Dendritic cell treated with granulocyte-macrophage colony-stimulating factor and Interleukin-4, amounts not matched to agents 40 ng/mL and 50 ng/mL, for 4 days (primary cell): ENCODE measurements at regions of chrX and their contacts with region 1.

Region 1: DNA sequence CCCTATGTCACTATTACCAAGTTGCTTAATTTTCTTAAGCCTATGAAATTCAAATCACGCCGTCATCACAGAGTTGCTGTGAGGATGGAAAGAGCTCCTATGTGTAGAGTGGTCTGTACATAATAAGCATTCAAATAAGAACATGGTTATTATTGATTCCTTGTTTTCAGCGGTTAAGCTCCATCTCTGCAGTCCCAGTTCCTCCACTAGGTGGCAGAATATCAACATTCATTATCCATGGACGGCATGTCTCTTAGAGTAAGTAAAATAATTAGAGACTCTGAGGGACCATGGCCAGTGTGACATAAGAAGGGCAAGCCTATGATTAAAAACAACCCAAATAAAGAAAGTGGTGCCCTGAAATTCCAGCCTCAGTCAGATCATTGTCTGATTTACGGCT is 132.5 kb upstream of the NHS start:
- H3K4me3 Mint-ChIP-seq: no peak overlapping the region
- H3K27ac Mint-ChIP-seq: no peak overlapping the region
- H3K4me1 Mint-ChIP-seq: no peaks in the 10 kb centered on the region
- H3K27me3 Mint-ChIP-seq: peaks cover 2% of the 10 kb centered on the region

Region 2: DNA sequence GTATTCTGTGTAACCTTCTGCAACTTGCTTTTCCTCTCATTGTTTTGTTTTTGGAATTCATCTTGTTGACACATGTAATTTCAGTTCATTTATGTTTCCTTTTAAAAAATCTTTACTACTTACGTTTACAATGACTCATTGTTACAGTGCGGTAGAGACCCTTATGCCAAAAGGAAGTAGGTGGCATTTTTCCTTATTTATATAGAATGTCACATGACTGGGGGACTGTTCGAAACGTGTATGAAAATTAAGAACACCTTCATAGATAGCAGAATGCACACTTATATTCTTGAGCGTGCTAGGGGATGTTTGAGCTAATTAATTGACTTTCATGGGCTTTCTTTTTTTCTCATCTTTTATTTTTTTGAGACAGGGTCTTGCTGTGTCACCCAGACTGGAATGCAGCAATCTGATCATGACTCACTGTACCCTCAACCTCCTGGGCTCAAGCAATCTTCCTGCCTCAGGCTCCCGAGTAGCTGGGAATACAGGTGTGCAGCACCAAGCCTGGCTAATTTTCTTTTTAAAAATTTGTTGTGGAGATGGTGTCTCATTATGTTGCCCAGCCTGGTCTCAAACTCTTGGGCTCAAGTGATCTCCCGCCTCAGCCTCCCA is 288.8 kb before region 1 on chrX:
- intact Hi-C with region 1: no loop called
- H3K4me3 Mint-ChIP-seq: no peak overlapping the region
- H3K27ac Mint-ChIP-seq: no peak overlapping the region
- H3K4me1 Mint-ChIP-seq: peaks cover 18% of the 10 kb centered on the region
- H3K27me3 Mint-ChIP-seq: no peaks in the 10 kb centered on the region

Region 3: GRCh38 chrX:17187136-17187756 is 55.2 kb before region 1 on chrX:
- intact Hi-C with region 1: no loop called
- H3K4me3 Mint-ChIP-seq: no peak overlapping the region
- H3K27ac Mint-ChIP-seq: no peak overlapping the region
- H3K4me1 Mint-ChIP-seq: no peaks in the 10 kb centered on the region
- H3K27me3 Mint-ChIP-seq: no peaks in the 10 kb centered on the region

Region 4: GRCh38 chrX:17285983-17286382 is 43.5 kb after region 1 on chrX:
- intact Hi-C with region 1: no loop called
- H3K4me3 Mint-ChIP-seq: no peak overlapping the region
- H3K27ac Mint-ChIP-seq: no peak overlapping the region
- H3K4me1 Mint-ChIP-seq: no peaks in the 10 kb centered on the region
- H3K27me3 Mint-ChIP-seq: peaks cover 3% of the 10 kb centered on the region

Region 5: DNA sequence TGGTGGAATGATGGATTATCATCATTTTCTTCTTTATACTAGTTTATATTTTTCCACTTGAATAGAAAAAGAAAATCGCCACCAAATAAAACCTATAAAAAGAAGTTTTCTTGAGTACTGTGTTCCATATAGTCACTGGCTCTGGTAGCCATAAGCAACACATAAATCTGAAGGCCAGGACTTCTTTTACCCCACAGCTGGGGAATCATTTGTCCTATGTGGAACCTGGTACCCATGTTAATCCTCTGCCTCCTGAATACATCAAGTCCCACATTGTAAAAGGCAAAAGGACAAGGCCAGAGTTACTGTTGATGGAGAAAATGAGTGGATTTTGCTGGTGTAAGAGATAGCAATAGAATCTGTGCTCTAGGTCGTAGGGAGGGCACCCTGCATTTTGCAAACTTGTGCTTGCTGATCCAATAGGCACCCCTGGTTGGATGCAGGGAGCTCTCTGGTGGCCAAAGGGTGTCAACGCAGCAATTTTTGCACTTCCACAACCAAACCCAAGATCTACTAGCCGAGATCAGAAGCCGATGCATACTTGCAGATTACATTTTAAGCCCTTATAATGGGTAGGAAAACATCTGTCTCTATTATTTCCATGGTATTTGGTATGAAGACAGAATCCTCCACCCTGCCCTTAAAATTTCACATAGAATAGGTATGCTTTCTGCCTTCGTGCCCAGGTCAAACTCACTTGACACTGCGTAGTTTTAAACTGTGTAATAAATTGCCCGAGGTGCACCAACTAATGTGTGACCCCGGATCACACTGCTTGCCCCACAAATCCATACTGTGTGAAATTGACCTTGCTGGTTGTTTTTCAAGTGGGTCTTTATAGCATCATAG is 348.6 kb after region 1 on chrX:
- intact Hi-C with region 1: loop called (anchors 1 kb)
- H3K4me3 Mint-ChIP-seq: no peak overlapping the region
- H3K27ac Mint-ChIP-seq: no peak overlapping the region
- H3K4me1 Mint-ChIP-seq: no peaks in the 10 kb centered on the region
- H3K27me3 Mint-ChIP-seq: no peaks in the 10 kb centered on the region

Region 6: GRCh38 chrX:17689971-17690409 is 447.5 kb after region 1 on chrX:
- intact Hi-C with region 1: loop called (anchors 2 kb)
- H3K4me3 Mint-ChIP-seq: no peak overlapping the region
- H3K27ac Mint-ChIP-seq: no peak overlapping the region
- H3K4me1 Mint-ChIP-seq: no peaks in the 10 kb centered on the region
- H3K27me3 Mint-ChIP-seq: no peaks in the 10 kb centered on the region